ENCODE measurements at regions of chr11 and their contacts with region 1.

Region 1: GRCh38 chr11:19742588-19743292 is 30.1 kb downstream of the NAV2 start:
- DNase-seq: peak; percentile 49 to 84
- H3K4me3 ChIP-seq: no peak overlapping the region
- H3K27ac ChIP-seq: no peak overlapping the region
- H3K4me1 ChIP-seq: peaks cover 0 to 12% (median 3%) of the 10 kb centered on the region in 4 experiments; a peak in 2 of 7 replicates
- H3K27me3 ChIP-seq: no peaks in the 10 kb centered on the region
- CTCF ChIP-seq: peak; percentile 76 to 97 (median 91)
- EP300 ChIP-seq: no peak
- POLR2A ChIP-seq: no peak
- RAD21 ChIP-seq: peak; percentile 93 to 97

Region 2: GRCh38 chr11:19370100-19370861 is 372.5 kb before region 1 on chr11:
- CTCF ChIA-PET with region 1: no interaction called
- POLR2A ChIA-PET with region 1: no interaction called
- DNase-seq: no peak
- H3K4me3 ChIP-seq: no peak overlapping the region
- H3K27ac ChIP-seq: no peak overlapping the region
- H3K4me1 ChIP-seq: peaks cover 0 to 3% (median 2%) of the 10 kb centered on the region in 4 experiments; a peak in 4 of 7 replicates
- H3K27me3 ChIP-seq: no peaks in the 10 kb centered on the region
- CTCF ChIP-seq: no peak
- EP300 ChIP-seq: no peak
- POLR2A ChIP-seq: no peak
- RAD21 ChIP-seq: no peak

Region 3: GRCh38 chr11:19577976-19578619 is 164.6 kb before region 1 on chr11:
- CTCF ChIA-PET with region 1: interaction called, 15 read pairs
- POLR2A ChIA-PET with region 1: no interaction called
- DNase-seq: no peak
- H3K4me3 ChIP-seq: no peak overlapping the region
- H3K27ac ChIP-seq: no peak overlapping the region
- H3K4me1 ChIP-seq: peaks cover 0 to 3% (median 0%) of the 10 kb centered on the region in 4 experiments; a peak in 1 of 7 replicates
- H3K27me3 ChIP-seq: no peaks in the 10 kb centered on the region
- CTCF ChIP-seq: no peak
- EP300 ChIP-seq: no peak
- POLR2A ChIP-seq: no peak
- RAD21 ChIP-seq: no peak

Region 4: GRCh38 chr11:19673924-19674729 is 68.6 kb before region 1 on chr11:
- CTCF ChIA-PET with region 1: interaction called, 14 read pairs
- POLR2A ChIA-PET with region 1: no interaction called
- DNase-seq: peak in 1 of 2 experiments; percentile 54
- H3K4me3 ChIP-seq: no peak overlapping the region
- H3K27ac ChIP-seq: no peak overlapping the region
- H3K4me1 ChIP-seq: peaks cover 2 to 18% (median 13%) of the 10 kb centered on the region in 4 experiments; a peak in 5 of 7 replicates
- H3K27me3 ChIP-seq: peaks cover 0 to 2% (median 0%) of the 10 kb centered on the region in 4 experiments; a peak in 1 of 7 replicates
- CTCF ChIP-seq: no peak
- EP300 ChIP-seq: no peak
- POLR2A ChIP-seq: no peak
- RAD21 ChIP-seq: no peak

Region 5: DNA sequence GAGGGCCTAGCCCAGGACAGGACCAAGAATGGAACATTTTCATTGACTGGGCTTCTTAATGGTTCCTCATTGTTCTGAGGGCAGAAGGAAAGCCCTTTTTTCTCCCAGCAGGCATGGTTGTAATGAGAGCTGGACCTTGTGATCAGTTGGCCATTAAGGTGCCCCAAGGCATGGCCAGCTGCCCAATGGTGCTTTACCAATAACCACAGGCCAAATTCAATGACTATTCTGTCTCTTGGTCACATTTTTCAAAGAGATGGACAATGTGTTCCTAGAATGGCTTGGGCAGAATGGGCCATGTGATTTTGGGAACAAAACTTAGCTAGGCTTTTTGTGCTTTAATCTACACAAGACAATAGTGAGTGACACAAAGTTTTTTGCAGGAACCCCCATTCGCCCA is 22.8 kb before region 1 on chr11:
- CTCF ChIA-PET with region 1: interaction called, 27 read pairs
- POLR2A ChIA-PET with region 1: no interaction called
- DNase-seq: no peak
- H3K4me3 ChIP-seq: no peak overlapping the region
- H3K27ac ChIP-seq: no peak overlapping the region
- H3K4me1 ChIP-seq: 0 out of 7 replicates have a peak, but pooled peaks cover 0 to under 1% (median 0%) of the 10 kb centered on the region in 4 experiments
- H3K27me3 ChIP-seq: peaks cover 0 to 10% (median 6%) of the 10 kb centered on the region in 4 experiments; a peak in 6 of 7 replicates
- CTCF ChIP-seq: no peak
- EP300 ChIP-seq: no peak
- POLR2A ChIP-seq: no peak
- RAD21 ChIP-seq: no peak

Region 6: DNA sequence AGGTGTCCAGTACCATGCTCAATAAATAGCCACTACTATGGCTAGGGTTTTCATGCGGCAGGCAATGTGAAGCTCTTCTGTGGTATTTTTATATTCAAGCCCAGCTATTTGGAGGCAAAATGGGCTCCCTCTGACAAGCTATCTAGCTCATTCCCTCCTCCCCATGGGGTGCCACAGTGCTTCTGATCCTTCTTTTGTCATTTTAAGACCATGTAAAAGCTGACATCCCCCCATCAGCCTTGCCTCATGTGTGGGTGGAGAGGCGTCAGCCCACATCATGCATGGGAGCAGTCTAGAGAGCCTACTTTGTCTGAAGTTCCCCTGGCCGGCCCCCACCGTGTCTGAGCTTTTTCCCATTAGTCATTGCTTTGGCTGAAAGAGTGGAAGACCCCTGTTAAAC is 29.7 kb after region 1 on chr11:
- CTCF ChIA-PET with region 1: interaction called, 25 read pairs
- POLR2A ChIA-PET with region 1: no interaction called
- DNase-seq: peak; percentile 66 to 89
- H3K4me3 ChIP-seq: peak overlapping the region in 1 of 4 experiments; percentile 27; a peak in 1 of 8 replicates
- H3K27ac ChIP-seq: 0 out of 2 replicates have a peak overlapping the region, but pooled peaks have one; percentile 6
- H3K4me1 ChIP-seq: peaks cover 18 to 36% (median 26%) of the 10 kb centered on the region in 4 experiments
- H3K27me3 ChIP-seq: no peaks in the 10 kb centered on the region
- CTCF ChIP-seq: no peak
- EP300 ChIP-seq: peak in 1 of 2 experiments; percentile 76; a peak in 1 of 3 replicates
- POLR2A ChIP-seq: no peak; a peak in 1 of 3 replicates
- RAD21 ChIP-seq: no peak; a peak in 1 of 4 replicates

Region 7: GRCh38 chr11:19879307-19880087 is 136.8 kb after region 1 on chr11:
- CTCF ChIA-PET with region 1: no interaction called
- POLR2A ChIA-PET with region 1: no interaction called
- DNase-seq: no peak
- H3K4me3 ChIP-seq: no peak overlapping the region
- H3K27ac ChIP-seq: no peak overlapping the region; the same call in 1 of the 2 replicates
- H3K4me1 ChIP-seq: no peaks in the 10 kb centered on the region; a peak in 1 of 7 replicates
- H3K27me3 ChIP-seq: no peaks in the 10 kb centered on the region
- CTCF ChIP-seq: no peak
- EP300 ChIP-seq: no peak
- POLR2A ChIP-seq: no peak
- RAD21 ChIP-seq: no peak

Measured in H1 (cell line).